SK-N-SH (cell line): ENCODE measurements at regions of chr6 and their contacts with region 1.

Region 1: DNA sequence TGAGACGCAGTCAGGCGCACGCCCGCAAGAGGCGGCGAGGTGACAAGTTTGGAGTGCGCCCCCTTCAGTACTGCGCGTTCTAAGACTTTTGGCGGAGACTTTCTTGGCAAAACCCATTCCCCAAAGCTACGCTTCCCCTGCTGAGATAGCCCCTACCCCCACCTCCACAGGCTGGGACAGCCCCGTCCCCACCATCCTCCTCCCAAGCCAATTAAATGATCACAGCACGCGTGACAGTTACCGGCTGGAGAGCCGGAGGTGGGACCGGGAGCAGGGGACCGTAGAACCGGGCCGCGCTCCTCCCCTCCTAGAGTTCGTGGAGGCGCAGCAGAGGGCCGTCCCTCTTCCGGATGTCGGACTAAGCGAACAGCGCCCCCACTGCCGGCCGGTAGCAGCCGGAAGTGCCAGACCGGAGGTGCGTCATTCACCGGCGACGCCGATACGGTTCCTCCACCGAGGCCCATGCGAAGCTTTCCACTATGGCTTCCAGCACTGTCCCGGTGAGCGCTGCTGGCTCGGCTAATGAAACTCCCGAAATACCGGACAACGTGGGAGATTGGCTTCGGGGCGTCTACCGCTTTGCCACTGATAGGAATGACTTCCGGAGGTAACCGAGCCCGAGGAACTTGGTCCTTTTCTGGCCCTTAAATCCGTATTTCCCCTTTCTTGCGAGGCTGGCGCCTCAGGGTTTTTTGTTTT is at the start of gene TOMM6:
- DNase-seq: peak; percentile 91
- H3K4me3 ChIP-seq: peak within 1 kb of the TSS; percentile 66 to 100
- H3K27ac ChIP-seq: peak within 1 kb of the TSS; percentile 90 to 93
- H3K4me1 ChIP-seq: peaks cover 9 to 17% of the 10 kb centered on the region in 2 experiments; a peak in 2 of 4 replicates
- H3K27me3 ChIP-seq: no peaks in the 10 kb centered on the region
- CTCF ChIP-seq: peak; percentile 70
- EP300 ChIP-seq: no peak
- RAD21 ChIP-seq: peak; percentile 13; the same call in 1 of the 2 replicates
- polyA plus RNA-seq, gene TOMM6: 493 and 565 TPM in 2 replicates

Region 2: DNA sequence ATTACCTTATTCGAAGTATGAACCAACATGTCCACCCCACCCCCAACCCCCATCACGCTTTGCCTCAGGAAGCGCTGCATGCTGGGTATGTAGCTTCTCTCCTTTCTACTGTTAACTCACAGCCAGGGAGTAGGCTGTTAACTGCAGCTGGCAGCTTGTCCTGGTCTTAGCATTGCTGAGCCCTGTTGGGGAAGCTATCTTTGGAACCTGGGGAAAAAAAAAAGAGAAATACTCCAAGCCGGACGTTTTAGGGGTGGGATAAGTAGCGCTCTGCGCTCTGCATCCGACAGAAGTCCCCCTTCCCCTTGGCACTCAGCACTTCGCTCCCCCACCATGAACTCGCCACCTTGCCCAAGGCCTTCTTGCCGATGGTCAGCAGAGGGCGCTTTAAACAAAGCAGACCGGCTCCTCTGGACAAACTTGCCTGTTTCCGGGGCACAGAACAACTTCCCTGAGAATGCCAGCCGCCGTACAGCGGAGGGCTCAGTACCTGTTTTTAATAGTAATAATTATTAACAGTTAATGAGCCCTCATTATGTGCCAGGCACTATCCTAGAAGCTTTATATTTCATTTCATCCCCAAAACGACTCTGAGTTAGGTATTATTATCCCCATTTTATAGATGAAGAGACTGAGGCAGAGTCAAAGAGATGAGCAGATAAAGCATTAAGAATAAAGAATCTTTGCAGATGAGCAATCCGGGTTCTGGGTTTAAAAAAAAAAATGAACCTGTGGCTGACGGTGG is 184.3 kb before region 1 on chr6:
- CTCF ChIA-PET with region 1: interaction called, 19 read pairs
- POLR2A ChIA-PET with region 1: no interaction called
- DNase-seq: peak; percentile 90
- H3K4me3 ChIP-seq: peak overlapping the region; percentile 17 to 54; a peak in 3 of 4 replicates
- H3K27ac ChIP-seq: peak overlapping the region; percentile 3 to 36; a peak in 1 of 4 replicates
- H3K4me1 ChIP-seq: peaks cover 0 to 7% of the 10 kb centered on the region in 2 experiments; a peak in 1 of 4 replicates
- H3K27me3 ChIP-seq: no peaks in the 10 kb centered on the region
- CTCF ChIP-seq: peak; percentile 95
- EP300 ChIP-seq: no peak
- RAD21 ChIP-seq: peak; percentile 93

Region 3: GRCh38 chr6:41713161-41713649 is 74.2 kb before region 1 on chr6:
- CTCF ChIA-PET with region 1: interaction called, 10 read pairs
- POLR2A ChIA-PET with region 1: no interaction called
- DNase-seq: no peak
- H3K4me3 ChIP-seq: no peak overlapping the region
- H3K27ac ChIP-seq: peak overlapping the region; percentile 17 to 63; a peak in 3 of 4 replicates
- H3K4me1 ChIP-seq: peaks cover 30 to 53% of the 10 kb centered on the region in 2 experiments; a peak in 3 of 4 replicates
- H3K27me3 ChIP-seq: no peaks in the 10 kb centered on the region
- CTCF ChIP-seq: no peak
- EP300 ChIP-seq: peak in 1 of 2 experiments; percentile 64; a peak in 1 of 4 replicates
- RAD21 ChIP-seq: no peak

Region 4: DNA sequence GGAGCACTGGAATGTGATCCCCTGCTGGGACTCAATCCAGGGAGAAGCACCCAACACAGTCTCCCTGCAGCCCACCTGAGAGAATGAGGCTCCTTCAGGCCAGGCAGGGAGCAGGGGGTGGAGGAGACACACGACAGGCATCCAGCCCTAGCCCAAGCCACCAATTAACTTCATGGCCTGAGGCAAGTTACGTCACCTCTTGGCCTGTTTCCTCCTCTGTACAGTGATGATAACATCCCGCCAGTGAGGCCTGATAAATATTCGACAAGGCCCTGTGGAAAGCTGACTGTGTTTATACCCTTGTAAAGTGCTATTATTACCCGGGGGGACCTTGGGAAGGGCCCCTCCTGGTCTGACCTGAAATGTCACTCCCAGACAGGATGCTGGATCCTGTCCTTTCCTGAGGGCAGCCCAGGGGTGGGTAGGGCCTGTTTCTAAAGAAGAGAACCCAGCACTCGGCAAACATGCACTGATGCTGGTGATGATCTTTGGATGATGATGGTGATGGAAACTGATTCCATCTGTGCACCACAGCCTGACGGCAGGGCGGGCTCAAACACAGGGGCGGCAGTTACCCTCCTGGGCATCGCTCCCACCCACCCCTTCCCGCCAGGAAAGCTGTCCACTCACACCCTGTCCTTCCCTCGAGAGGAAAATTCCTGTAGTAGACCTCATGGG is 20.1 kb before region 1 on chr6:
- CTCF ChIA-PET with region 1: interaction called, 19 read pairs
- POLR2A ChIA-PET with region 1: interaction called, 4 read pairs
- DNase-seq: peak; percentile 89
- H3K4me3 ChIP-seq: no peak overlapping the region
- H3K27ac ChIP-seq: peak overlapping the region in 1 of 2 experiments; percentile 80; a peak in 2 of 4 replicates
- H3K4me1 ChIP-seq: peaks cover 3 to 37% of the 10 kb centered on the region in 2 experiments; a peak in 2 of 4 replicates
- H3K27me3 ChIP-seq: no peaks in the 10 kb centered on the region
- CTCF ChIP-seq: no peak
- EP300 ChIP-seq: peak in 1 of 2 experiments; percentile 81; a peak in 2 of 4 replicates
- RAD21 ChIP-seq: no peak; the same call in 1 of the 2 replicates

Region 5: GRCh38 chr6:41836022-41836659 is 48.8 kb after region 1 on chr6:
- CTCF ChIA-PET with region 1: interaction called, 12 read pairs
- POLR2A ChIA-PET with region 1: no interaction called
- DNase-seq: no peak
- H3K4me3 ChIP-seq: no peak overlapping the region
- H3K27ac ChIP-seq: no peak overlapping the region
- H3K4me1 ChIP-seq: peaks cover 0 to 6% of the 10 kb centered on the region in 2 experiments; a peak in 1 of 4 replicates
- H3K27me3 ChIP-seq: no peaks in the 10 kb centered on the region
- CTCF ChIP-seq: no peak
- EP300 ChIP-seq: no peak
- RAD21 ChIP-seq: no peak

Region 6: DNA sequence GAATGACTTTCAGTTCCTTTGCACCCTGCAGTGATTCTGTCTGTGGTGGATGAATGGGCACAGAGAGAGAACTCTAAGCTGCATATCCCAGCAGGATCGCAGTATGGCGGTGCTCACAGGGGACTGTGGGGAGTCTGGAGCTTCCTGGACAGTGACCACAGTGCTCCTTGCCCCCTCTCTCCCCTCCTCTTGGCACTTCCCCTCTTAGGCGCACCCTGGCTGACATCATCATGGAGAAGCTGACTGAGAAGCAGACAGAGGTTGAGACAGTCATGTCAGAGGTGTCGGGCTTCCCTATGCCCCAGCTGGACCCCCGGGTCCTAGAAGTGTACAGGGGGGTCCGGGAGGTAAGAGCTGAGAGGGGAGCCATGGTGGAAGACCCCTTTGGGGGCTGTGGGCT is 142.6 kb after region 1 on chr6:
- CTCF ChIA-PET with region 1: interaction called, 56 read pairs
- POLR2A ChIA-PET with region 1: no interaction called
- DNase-seq: no peak
- H3K4me3 ChIP-seq: no peak overlapping the region
- H3K27ac ChIP-seq: no peak overlapping the region
- H3K4me1 ChIP-seq: no peaks in the 10 kb centered on the region; a peak in 1 of 4 replicates
- H3K27me3 ChIP-seq: no peaks in the 10 kb centered on the region
- CTCF ChIP-seq: no peak
- EP300 ChIP-seq: no peak
- RAD21 ChIP-seq: no peak

Region 7: DNA sequence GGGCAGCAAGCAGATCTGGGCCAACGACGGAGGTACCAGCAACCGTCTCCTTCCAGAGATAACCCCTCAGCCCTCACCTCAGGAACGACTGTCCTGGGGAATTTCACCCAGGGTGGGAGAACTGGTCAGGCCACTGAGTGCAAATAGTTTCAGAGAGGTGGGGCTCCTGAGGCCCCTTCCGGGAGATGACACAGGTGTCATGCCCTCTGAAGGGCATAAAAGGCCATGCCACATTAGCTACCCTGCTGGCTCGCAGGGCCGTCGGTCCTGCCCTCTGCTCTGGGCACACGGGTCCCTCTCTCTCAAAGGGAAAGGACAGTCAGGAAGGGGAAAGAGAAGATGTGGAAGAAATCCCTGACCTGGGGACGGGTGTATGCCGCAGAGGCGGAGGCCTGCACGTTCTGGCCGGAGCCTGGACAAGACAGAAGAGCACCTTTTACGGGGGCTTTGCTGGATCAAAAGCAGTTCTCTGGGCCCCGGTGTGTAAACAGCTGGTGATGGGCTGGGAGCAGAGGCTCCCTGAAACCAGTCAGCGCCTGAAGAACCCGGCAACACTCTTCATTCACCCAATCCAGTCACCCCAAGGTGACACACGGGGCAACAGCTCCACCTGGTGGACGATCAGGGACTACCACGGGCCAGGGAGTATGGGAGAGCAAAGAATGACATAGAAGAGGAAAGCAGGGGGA is 256.6 kb after region 1 on chr6:
- CTCF ChIA-PET with region 1: interaction called, 118 read pairs
- POLR2A ChIA-PET with region 1: no interaction called
- DNase-seq: peak; percentile 92
- H3K4me3 ChIP-seq: no peak overlapping the region; a peak in 1 of 4 replicates
- H3K27ac ChIP-seq: no peak overlapping the region
- H3K4me1 ChIP-seq: peaks cover 8 to 12% of the 10 kb centered on the region in 2 experiments; a peak in 2 of 4 replicates
- H3K27me3 ChIP-seq: no peaks in the 10 kb centered on the region
- CTCF ChIP-seq: peak; percentile 97
- EP300 ChIP-seq: no peak
- RAD21 ChIP-seq: peak; percentile 99

Region 8: GRCh38 chr6:42629845-42630244 is 842.5 kb after region 1 on chr6:
- CTCF ChIA-PET with region 1: no interaction called
- POLR2A ChIA-PET with region 1: no interaction called
- DNase-seq: no peak
- H3K4me3 ChIP-seq: no peak overlapping the region
- H3K27ac ChIP-seq: no peak overlapping the region
- H3K4me1 ChIP-seq: no peaks in the 10 kb centered on the region
- H3K27me3 ChIP-seq: no peaks in the 10 kb centered on the region
- CTCF ChIP-seq: no peak
- EP300 ChIP-seq: no peak
- RAD21 ChIP-seq: no peak